Heart right ventricle (tissue), 16 donors: ENCODE measurements at regions of chr13 and their contacts with region 1.

Region 1: GRCh38 chr13:26985285-26985878 is 186.2 kb downstream of the USP12 start:
- DNase-seq: peak in 1 of 2 donors; percentile 76
- ATAC-seq: peak; percentile 44 to 78 (median 66)
- H3K4me3 ChIP-seq: no peak overlapping the region
- H3K27ac ChIP-seq: no peak overlapping the region
- H3K4me1 ChIP-seq: peaks cover 0 to 27% (median 13%) of the 10 kb centered on the region in 9 donors
- H3K27me3 ChIP-seq: no peaks in the 10 kb centered on the region
- CTCF ChIP-seq: peak; percentile 49 to 90 (median 80)

Region 2: DNA sequence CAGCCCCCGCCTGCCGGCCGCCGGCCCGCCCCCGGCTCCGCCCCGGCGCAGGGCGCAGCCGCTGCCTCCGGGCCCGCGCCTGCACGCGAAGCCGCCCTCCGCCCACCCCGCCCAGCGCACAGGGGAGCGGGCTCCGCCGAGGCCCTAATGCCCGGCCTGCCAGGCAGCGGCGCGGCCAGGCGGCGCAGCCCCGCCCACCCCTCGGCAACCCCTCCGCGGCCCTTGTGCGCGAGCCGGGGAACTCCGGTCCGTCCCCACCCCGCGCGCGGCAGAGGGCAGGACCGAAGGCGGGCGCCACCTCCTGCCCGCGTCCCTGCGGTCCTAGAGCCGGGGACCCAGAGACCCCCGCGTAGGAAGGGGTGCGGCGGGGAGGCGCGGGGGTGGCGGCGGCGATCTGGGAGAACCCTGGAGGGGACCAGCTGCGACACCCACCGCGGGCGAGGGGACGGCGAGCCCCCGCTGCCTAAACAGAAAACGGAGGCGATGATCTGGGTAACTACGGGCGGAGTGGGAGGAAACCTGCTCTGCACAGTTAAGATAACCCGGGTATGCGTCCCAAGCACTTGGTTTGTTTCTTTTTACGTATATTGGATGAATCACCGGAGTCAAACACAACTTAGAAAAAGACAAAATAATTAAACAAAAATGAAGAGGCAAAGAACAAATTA is 186.6 kb after region 1 on chr13:
- intact Hi-C with region 1: loop called in 4 of 10 experiments (anchors 5 to 10 kb)
- DNase-seq: peak; percentile 90 to 95
- ATAC-seq: peak; percentile 94 to 99 (median 96)
- H3K4me3 ChIP-seq: peak overlapping the region; percentile 79 to 97 (median 87)
- H3K27ac ChIP-seq: peak overlapping the region; percentile 81 to 97 (median 95)
- H3K4me1 ChIP-seq: peaks cover 11 to 63% (median 38%) of the 10 kb centered on the region in 9 donors
- H3K27me3 ChIP-seq: no peaks in the 10 kb centered on the region
- CTCF ChIP-seq: peak in 7 of 9 donors; percentile 17 to 56 (median 29)

Region 3: GRCh38 chr13:27251166-27252091 is 266.0 kb after region 1 on chr13 and contains the start of gene RPL21:
- intact Hi-C with region 1: loop called in 1 of 10 experiments (anchors 10 kb)
- DNase-seq: peak; percentile 95 to 98
- ATAC-seq: peak; percentile 98 to 99 (median 99)
- H3K4me3 ChIP-seq: peak within 1 kb of the TSS; percentile 74 to 94 (median 80)
- H3K27ac ChIP-seq: peak within 1 kb of the TSS; percentile 90 to 99 (median 96)
- H3K4me1 ChIP-seq: peaks cover 6 to 52% (median 39%) of the 10 kb centered on the region in 9 donors
- H3K27me3 ChIP-seq: no peaks in the 10 kb centered on the region
- CTCF ChIP-seq: peak in 1 of 9 donors; percentile 5
- total RNA-seq, gene RPL21: 498 to 733 (median 598) TPM

Region 4: DNA sequence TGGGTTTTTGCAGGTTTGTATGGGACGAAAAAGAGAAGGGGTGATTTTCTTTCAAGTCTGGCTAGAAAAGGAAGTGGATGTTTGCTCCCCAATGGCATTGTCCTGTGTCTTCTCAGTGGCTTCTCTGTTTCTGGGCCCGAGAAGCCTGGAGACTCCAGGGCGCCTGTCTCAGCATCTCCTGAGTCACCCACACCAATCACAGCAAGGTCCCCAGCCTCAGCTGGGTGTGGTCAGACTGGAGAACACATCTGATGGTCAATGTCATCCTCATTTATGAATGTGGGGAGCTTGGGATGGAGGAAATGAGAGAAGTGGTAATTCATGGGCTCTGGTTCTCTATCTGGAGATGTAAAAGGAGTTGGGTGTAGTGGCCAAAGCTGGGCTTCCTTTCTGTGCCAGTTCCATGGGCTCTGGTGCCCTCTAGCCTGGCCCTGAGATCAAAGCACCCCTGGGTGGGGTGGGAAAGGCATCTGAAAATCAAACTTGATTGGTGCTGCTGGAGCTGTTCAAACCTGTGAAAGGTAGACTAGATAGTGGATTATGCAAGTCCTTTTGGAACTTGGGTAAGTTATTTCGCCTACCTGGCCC is 298.6 kb after region 1 on chr13:
- intact Hi-C with region 1: loop called in 5 of 10 experiments (anchors 2 to 5 kb)
- DNase-seq: no peak
- ATAC-seq: peak in 7 of 8 donors; percentile 49 to 81 (median 78)
- H3K4me3 ChIP-seq: no peak overlapping the region
- H3K27ac ChIP-seq: no peak overlapping the region
- H3K4me1 ChIP-seq: no peaks in the 10 kb centered on the region
- H3K27me3 ChIP-seq: peaks cover 0 to 4% (median 0%) of the 10 kb centered on the region in 7 donors
- CTCF ChIP-seq: peak in 8 of 9 donors; percentile 9 to 62 (median 50)

Region 5: GRCh38 chr13:27826379-27827353 is 841.3 kb after region 1 on chr13:
- intact Hi-C with region 1: loop called in 3 of 10 experiments (anchors 5 to 10 kb)
- DNase-seq: peak; percentile 74 to 76
- ATAC-seq: peak; percentile 87 to 95 (median 91)
- H3K4me3 ChIP-seq: peak overlapping the region in 7 of 10 donors; percentile 4 to 37 (median 23)
- H3K27ac ChIP-seq: no peak overlapping the region
- H3K4me1 ChIP-seq: peaks cover 0 to 18% (median 8%) of the 10 kb centered on the region in 9 donors
- H3K27me3 ChIP-seq: peaks cover 0 to 100% (median 89%) of the 10 kb centered on the region in 7 donors
- CTCF ChIP-seq: peak; percentile 82 to 97 (median 92)